ENCODE measurements at regions of chr6 and their contacts with region 1.

Region 1: GRCh38 chr6:158869826-158870648 is 50.9 kb upstream of the EZR start:
- DNase-seq: peak; percentile 99
- ATAC-seq: peak; percentile 70
- H3K4me3 ChIP-seq: peak overlapping the region in 4 of 5 experiments; percentile 41 to 55 (median 51)
- H3K4me3 Mint-ChIP-seq: peak overlapping the region; percentile 91
- H3K27ac ChIP-seq: peak overlapping the region; percentile 99 to 100
- H3K27ac Mint-ChIP-seq: peak overlapping the region; percentile 100
- H3K4me1 ChIP-seq: peaks cover 50 to 54% of the 10 kb centered on the region in 2 donors
- H3K4me1 Mint-ChIP-seq: peaks cover 61% of the 10 kb centered on the region
- H3K27me3 ChIP-seq: no peaks in the 10 kb centered on the region
- H3K27me3 Mint-ChIP-seq: no peaks in the 10 kb centered on the region
- CTCF ChIP-seq: peak; percentile 44

Region 2: GRCh38 chr6:158168040-158168289 is 702.1 kb before region 1 on chr6 and contains the start of gene SERAC1:
- CTCF ChIA-PET with region 1: no interaction called
- POLR2A ChIA-PET with region 1: no interaction called
- intact Hi-C with region 1: loop called (anchors 5 kb)
- DNase-seq: no peak
- ATAC-seq: peak; percentile 52
- H3K4me3 ChIP-seq: peak within 1 kb of the TSS; percentile 78 to 94 (median 83)
- H3K4me3 Mint-ChIP-seq: peak within 1 kb of the TSS; percentile 98
- H3K27ac ChIP-seq: peak within 1 kb of the TSS; percentile 83 to 95
- H3K27ac Mint-ChIP-seq: peak within 1 kb of the TSS; percentile 99
- H3K4me1 ChIP-seq: peaks cover 9 to 12% of the 10 kb centered on the region in 2 donors
- H3K4me1 Mint-ChIP-seq: peaks cover 14% of the 10 kb centered on the region
- H3K27me3 ChIP-seq: no peaks in the 10 kb centered on the region
- H3K27me3 Mint-ChIP-seq: no peaks in the 10 kb centered on the region
- CTCF ChIP-seq: no peak
- total RNA-seq, gene SERAC1: 4.8 and 5.8 TPM in 2 replicates

Region 3: GRCh38 chr6:158808941-158809678 is 60.9 kb before region 1 on chr6:
- CTCF ChIA-PET with region 1: interaction called, 38 read pairs
- POLR2A ChIA-PET with region 1: interaction called, 77 read pairs
- intact Hi-C with region 1: loop called (anchors 1 kb)
- DNase-seq: peak; percentile 89
- ATAC-seq: peak; percentile 80
- H3K4me3 ChIP-seq: peak overlapping the region in 3 of 5 experiments; percentile 12 to 50 (median 15)
- H3K4me3 Mint-ChIP-seq: peak overlapping the region; percentile 85
- H3K27ac ChIP-seq: peak overlapping the region; percentile 94 to 96
- H3K27ac Mint-ChIP-seq: peak overlapping the region; percentile 96
- H3K4me1 ChIP-seq: peaks cover 97 to 98% of the 10 kb centered on the region in 2 donors
- H3K4me1 Mint-ChIP-seq: peaks cover 96% of the 10 kb centered on the region
- H3K27me3 ChIP-seq: no peaks in the 10 kb centered on the region
- H3K27me3 Mint-ChIP-seq: no peaks in the 10 kb centered on the region
- CTCF ChIP-seq: no peak

Region 4: DNA sequence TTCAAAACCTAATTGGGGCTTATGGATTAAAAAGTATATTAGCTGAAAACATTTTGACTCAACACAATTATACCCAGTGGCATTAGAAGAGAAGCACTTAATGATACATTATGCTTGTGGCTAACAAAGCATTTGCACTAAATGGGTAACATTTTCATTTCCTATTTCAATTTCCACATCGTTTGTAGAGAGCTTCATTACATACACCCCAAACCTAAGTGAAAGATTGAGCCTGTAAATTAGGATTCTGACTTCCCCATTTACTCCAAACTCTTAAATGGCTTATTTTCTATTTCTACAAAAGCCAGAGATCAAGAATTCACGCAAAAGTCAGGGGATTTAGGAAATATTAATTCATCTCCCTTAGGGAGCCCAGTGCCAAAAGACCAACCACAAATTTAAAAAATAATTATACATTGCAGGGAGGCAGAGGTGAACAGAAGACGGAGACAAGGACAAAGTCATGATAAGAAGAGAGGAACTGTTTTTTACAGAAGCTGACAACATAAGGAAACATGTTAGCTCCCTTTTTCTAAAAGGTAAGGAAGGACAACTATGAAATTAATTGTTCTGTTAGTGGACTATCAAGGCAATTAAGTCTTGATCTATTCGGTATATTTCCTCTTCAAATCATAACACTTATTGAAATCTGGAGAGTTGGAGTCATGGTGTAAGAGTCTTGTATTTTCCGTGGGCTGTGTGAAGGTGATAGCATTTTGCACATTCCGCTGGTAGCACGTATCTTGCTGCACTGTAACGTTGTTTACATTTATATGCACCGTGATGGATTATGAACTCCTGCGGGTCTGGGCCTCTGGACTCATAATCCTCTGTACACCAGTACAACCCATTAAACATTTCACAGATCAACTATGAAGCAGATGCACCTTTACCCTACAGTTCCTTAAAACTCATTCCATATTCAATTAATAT is 26.0 kb before region 1 on chr6:
- CTCF ChIA-PET with region 1: interaction called, 4 read pairs
- POLR2A ChIA-PET with region 1: interaction called, 14 read pairs
- intact Hi-C with region 1: no loop called
- DNase-seq: peak; percentile 53
- ATAC-seq: peak; percentile 57
- H3K4me3 ChIP-seq: no peak overlapping the region
- H3K4me3 Mint-ChIP-seq: peak overlapping the region; percentile 2
- H3K27ac ChIP-seq: peak overlapping the region; percentile 62 to 79
- H3K27ac Mint-ChIP-seq: peak overlapping the region; percentile 53
- H3K4me1 ChIP-seq: peaks cover 23 to 24% of the 10 kb centered on the region in 2 donors
- H3K4me1 Mint-ChIP-seq: peaks cover 38% of the 10 kb centered on the region
- H3K27me3 ChIP-seq: no peaks in the 10 kb centered on the region
- H3K27me3 Mint-ChIP-seq: no peaks in the 10 kb centered on the region
- CTCF ChIP-seq: no peak

Region 5: DNA sequence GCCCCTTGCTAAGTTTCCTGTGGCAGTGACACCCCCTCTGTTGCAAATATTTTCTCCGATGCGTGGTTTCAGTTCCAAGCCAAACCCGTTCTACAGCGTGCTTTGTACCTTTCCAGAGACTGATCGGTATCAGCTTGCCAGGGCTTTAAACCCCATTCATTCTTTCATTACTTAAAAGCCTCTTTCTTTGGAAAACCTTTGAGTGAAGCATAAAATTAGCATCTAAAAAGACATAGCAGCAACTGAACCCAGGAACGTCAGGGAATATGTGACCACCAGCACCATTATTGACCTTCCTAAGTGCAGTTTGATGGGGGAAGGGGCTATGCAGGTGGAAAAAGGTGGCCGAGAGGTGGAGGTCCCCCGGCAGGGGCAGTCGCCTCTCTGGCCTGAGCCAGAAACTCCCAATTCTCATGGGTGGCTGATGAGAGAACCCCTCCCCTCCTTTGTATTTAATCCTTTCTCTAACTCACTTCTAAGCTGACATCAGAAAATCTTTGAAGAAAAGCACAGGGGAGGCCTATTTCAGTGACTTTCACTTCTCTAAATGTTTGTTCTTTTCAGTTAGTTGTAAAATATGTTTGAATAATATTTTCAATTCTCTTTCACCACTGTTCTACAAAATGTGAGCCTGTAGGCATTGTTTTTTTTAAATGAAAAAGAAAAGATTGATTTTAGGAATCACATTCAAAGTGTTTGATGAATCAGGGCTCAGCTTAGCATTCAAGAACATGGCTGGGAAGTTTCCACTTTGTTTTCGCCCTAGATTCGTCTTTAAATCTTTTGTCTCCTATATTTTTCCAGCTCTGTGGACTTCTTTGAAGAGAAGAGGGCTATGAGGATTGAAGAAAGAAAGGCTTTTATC is 40.7 kb after region 1 on chr6:
- CTCF ChIA-PET with region 1: interaction called, 24 read pairs
- POLR2A ChIA-PET with region 1: interaction called, 21 read pairs
- intact Hi-C with region 1: loop called (anchors 1 kb)
- DNase-seq: peak; percentile 76
- ATAC-seq: peak; percentile 78
- H3K4me3 ChIP-seq: peak overlapping the region; percentile 7 to 66 (median 43)
- H3K4me3 Mint-ChIP-seq: peak overlapping the region; percentile 84
- H3K27ac ChIP-seq: peak overlapping the region; percentile 88 to 93
- H3K27ac Mint-ChIP-seq: peak overlapping the region; percentile 98
- H3K4me1 ChIP-seq: peaks cover 28 to 47% of the 10 kb centered on the region in 2 donors
- H3K4me1 Mint-ChIP-seq: peaks cover 54% of the 10 kb centered on the region
- H3K27me3 ChIP-seq: no peaks in the 10 kb centered on the region
- H3K27me3 Mint-ChIP-seq: no peaks in the 10 kb centered on the region
- CTCF ChIP-seq: no peak

Region 6: GRCh38 chr6:158972241-158973233 is 102.5 kb after region 1 on chr6:
- CTCF ChIA-PET with region 1: interaction called, 29 read pairs
- POLR2A ChIA-PET with region 1: interaction called, 5 read pairs
- intact Hi-C with region 1: loop called (anchors 1 kb)
- DNase-seq: peak; percentile 77
- ATAC-seq: no peak
- H3K4me3 ChIP-seq: no peak overlapping the region
- H3K4me3 Mint-ChIP-seq: no peak overlapping the region
- H3K27ac ChIP-seq: no peak overlapping the region
- H3K27ac Mint-ChIP-seq: no peak overlapping the region
- H3K4me1 ChIP-seq: peaks cover 0 to 4% of the 10 kb centered on the region in 2 donors
- H3K4me1 Mint-ChIP-seq: peaks cover 6% of the 10 kb centered on the region
- H3K27me3 ChIP-seq: no peaks in the 10 kb centered on the region
- H3K27me3 Mint-ChIP-seq: no peaks in the 10 kb centered on the region
- CTCF ChIP-seq: peak; percentile 90